Posterior cingulate gyrus (tissue), 11 donors: ENCODE measurements at regions of chr9 and their contacts with region 1.

Region 1: DNA sequence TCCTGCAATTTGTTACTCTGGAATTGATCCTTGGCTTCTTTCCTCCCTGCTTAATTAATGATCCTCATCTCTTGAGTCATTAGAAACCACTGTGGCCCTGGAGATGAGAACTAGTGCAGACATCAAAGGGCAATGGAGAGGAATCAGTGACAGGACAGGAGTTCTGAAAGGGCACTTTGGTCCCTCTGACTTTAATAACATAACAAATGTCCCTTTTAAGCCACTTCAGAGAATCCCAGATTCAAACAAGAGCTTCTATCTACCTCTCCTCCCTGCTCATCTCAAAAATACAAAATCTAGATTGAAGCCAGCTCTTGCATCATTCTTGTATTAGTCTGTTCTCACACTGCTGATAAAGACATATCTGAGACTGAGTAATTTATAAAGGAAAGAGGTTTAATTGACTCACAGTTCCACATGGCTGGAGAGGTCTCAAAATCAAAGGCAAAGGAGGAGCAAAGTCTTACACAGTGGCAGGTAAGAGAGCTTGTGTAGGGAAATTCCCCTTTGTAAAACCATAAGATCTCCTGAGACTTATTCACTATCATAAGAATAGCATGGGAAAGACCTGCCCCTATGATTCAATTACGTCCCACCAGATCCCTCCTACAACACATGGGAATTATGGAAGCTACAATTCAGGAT is 139.1 kb downstream of the PLPPR1 start:
- DNase-seq: no peak

Region 2: DNA sequence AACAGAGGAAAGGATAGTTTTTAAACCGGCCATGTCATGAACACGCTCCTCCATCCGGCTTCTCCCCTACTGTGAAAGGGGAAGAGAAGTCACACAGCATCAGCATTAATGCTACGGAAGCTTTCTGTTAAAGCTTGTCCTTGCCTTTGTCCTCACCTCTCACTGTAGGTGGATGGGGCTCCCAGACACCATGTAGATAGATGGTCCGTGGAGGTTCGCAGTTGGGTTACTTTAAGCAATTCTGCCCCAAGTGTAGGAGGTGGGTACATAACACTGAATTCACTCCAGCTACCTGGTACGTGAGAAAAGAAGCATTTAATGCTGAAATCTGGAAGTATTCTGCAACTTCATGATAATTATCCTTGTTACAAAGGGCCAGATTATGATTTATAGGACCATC is 51.4 kb after region 1 on chr9:
- intact Hi-C with region 1: loop called (anchors 5 kb)
- DNase-seq: no peak